HEK293 (cell line): ENCODE measurements at regions of chr3 and their contacts with region 1.

Region 1: DNA sequence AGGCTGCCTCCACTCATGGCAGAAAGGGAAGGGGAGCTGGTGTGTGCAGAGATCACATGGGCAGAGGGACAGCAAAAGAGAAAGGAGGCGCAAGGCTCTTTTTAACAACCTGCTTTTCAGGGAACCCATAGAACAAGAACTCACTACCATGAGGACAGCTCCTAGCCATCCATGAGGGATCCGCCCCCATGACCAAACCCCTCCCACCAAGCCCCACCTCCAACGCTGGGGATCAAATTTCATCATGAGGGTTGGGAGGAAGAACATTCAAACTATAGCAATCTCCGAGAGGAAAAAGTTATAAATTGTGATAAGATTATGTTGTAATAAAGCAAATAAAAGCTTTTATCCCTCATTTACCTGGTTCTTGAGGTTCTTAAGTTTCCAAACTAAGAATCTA is 84.7 kb upstream of the LMCD1 start:
- H3K4me3 ChIP-seq: no peak overlapping the region
- H3K27ac ChIP-seq: no peak overlapping the region
- H3K4me1 ChIP-seq: no peaks in the 10 kb centered on the region
- CTCF ChIP-seq: no peak

Region 2: GRCh38 chr3:8239718-8240695 is 177.0 kb before region 1 on chr3:
- CTCF ChIA-PET with region 1: interaction called, 14 read pairs
- POLR2A ChIA-PET with region 1: no interaction called
- H3K4me3 ChIP-seq: no peak overlapping the region
- H3K27ac ChIP-seq: no peak overlapping the region
- H3K4me1 ChIP-seq: no peaks in the 10 kb centered on the region
- CTCF ChIP-seq: no peak

Region 3: GRCh38 chr3:8301728-8302462 is 115.1 kb before region 1 on chr3:
- CTCF ChIA-PET with region 1: interaction called, 20 read pairs
- POLR2A ChIA-PET with region 1: no interaction called
- H3K4me3 ChIP-seq: no peak overlapping the region
- H3K27ac ChIP-seq: no peak overlapping the region
- H3K4me1 ChIP-seq: no peaks in the 10 kb centered on the region
- CTCF ChIP-seq: 0 out of 2 replicates have a peak, but pooled peaks have one; percentile 19

Region 4: DNA sequence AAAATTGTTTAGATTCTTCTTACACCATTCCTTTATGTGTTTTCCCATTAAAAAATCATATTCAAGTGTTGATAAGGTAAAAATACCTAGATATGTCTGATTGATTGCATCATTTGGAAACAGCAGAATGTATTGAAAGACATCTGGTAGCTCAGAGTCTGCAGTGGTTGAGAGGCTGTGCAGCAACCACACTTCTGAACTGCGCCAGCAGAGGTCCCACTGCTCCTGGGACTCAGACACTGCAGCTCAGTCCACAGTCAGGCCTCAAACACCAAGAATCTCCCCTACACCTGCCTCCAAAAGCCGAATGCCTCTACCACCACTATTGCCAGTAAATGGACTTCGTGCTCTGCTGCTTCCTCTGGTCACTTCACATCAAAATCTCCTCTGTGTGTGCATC is 92.2 kb before region 1 on chr3:
- CTCF ChIA-PET with region 1: interaction called, 63 read pairs
- POLR2A ChIA-PET with region 1: interaction called, 5 read pairs
- H3K4me3 ChIP-seq: no peak overlapping the region
- H3K27ac ChIP-seq: no peak overlapping the region
- H3K4me1 ChIP-seq: peaks cover 13% of the 10 kb centered on the region
- CTCF ChIP-seq: peak; percentile 55; the same call in 1 of the 2 replicates

Region 5: GRCh38 chr3:8436718-8437184 is 19.8 kb after region 1 on chr3:
- CTCF ChIA-PET with region 1: interaction called, 11 read pairs
- POLR2A ChIA-PET with region 1: interaction called, 3 read pairs
- H3K4me3 ChIP-seq: no peak overlapping the region
- H3K27ac ChIP-seq: no peak overlapping the region
- H3K4me1 ChIP-seq: no peaks in the 10 kb centered on the region
- CTCF ChIP-seq: no peak

Region 6: GRCh38 chr3:8607234-8608040 is 190.5 kb after region 1 on chr3:
- CTCF ChIA-PET with region 1: interaction called, 12 read pairs
- POLR2A ChIA-PET with region 1: no interaction called
- H3K4me3 ChIP-seq: no peak overlapping the region
- H3K27ac ChIP-seq: no peak overlapping the region
- H3K4me1 ChIP-seq: no peaks in the 10 kb centered on the region
- CTCF ChIP-seq: peak; percentile 80

Region 7: DNA sequence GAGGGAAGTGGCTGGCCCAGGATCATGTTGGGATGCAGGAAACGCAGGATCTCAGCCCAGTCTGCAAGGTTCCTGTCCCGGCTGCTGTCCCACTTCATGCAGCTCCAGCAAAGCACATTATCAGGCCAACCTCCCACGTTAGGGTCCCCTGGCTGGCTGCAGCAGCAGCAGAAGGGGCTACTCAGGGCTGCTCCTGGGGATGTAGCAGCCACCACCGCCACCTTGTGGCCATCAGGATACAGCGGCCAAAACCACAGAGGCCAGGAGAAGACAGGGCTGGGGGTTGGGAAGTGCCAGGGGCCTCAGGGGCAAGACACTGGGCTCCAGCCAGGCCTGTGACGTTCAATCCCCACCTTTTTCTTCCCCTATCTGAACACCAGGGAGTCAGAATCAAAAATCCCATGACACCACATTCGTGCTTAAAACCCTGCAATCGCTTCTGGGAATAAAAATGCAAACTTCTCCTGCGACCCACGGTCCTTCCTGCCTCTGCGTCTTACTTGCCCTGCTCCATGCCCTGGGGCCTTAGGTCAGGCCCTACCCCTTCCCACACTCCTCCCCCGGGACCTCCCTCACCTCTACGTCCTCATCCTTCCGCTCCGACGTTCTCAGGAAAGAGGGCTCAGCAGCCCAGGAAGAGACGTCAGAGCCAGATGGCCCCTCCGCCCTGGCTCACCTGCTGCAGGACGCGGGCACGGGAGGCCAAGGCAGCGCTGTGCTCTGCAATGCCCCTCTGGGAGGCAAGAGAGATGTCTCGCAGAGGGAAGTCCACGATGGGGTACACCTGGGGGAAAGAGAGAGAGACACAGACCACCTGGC is 206.1 kb after region 1 on chr3:
- CTCF ChIA-PET with region 1: interaction called, 12 read pairs
- POLR2A ChIA-PET with region 1: no interaction called
- H3K4me3 ChIP-seq: no peak overlapping the region
- H3K27ac ChIP-seq: no peak overlapping the region
- H3K4me1 ChIP-seq: no peaks in the 10 kb centered on the region
- CTCF ChIP-seq: peak; percentile 80